Mammary epithelial cell (primary cell): ENCODE measurements at regions of chr15 and their contacts with region 1.

Region 1: DNA sequence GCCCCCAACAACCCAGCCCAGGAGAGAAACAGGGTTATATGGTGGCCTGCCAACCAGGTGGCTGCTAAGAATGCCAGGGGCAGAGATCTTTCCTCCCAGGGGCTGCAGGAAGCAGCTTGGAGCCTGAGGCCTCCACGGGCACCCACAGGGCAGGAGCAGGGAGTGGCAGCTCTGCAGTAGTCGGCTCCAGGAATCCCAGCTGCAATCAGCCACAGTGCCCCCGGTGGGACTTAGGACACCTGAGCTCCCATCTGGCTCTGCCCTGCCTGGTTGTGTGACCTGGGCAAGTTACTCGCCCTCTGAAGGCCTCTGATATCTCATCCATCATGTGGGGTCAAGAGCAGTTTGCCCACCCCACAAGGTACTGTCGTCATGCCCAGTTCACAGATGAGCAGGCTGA is 15.6 kb downstream of the ADAMTS7 start:
- DNase-seq: no peak
- H3K4me3 ChIP-seq: no peak overlapping the region
- H3K27ac ChIP-seq: no peak overlapping the region
- H3K4me1 ChIP-seq: peaks cover 15% of the 10 kb centered on the region
- H3K27me3 ChIP-seq: no peaks in the 10 kb centered on the region
- CTCF ChIP-seq: no peak

Region 2: GRCh38 chr15:78691167-78691872 is 104.3 kb before region 1 on chr15:
- CTCF ChIA-PET with region 1: no interaction called
- dilution Hi-C with region 1: loop called (anchors 5 kb)
- in situ Hi-C with region 1: no loop called
- intact Hi-C with region 1: no loop called
- DNase-seq: no peak
- H3K4me3 ChIP-seq: no peak overlapping the region
- H3K27ac ChIP-seq: no peak overlapping the region
- H3K4me1 ChIP-seq: peaks cover 12% of the 10 kb centered on the region
- H3K27me3 ChIP-seq: no peaks in the 10 kb centered on the region
- CTCF ChIP-seq: no peak